Heart right ventricle (tissue), 16 donors: ENCODE measurements at regions of chr11 and their contacts with region 1.

Region 1: DNA sequence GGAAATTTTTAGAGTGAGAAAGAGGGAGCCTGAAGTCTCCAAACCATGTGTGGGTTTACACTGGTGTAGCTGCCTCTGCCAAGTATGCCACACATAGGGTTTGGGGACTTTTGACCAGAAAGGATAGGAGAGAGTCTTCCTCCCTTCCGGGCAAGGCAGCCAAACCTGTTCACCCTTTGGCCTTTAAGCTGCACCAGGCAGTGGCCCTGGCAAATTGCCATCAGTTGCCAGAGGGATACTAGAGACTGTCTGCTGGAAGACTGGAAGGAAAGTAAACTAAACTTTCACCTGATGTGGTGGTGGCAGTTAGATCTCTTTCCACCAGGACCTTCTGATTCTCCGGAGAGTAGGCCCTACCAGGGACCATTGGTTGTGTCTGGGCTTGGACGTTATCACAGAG is 1263.2 kb downstream of the FAM181B start:
- DNase-seq: no peak
- ATAC-seq: no peak
- H3K4me3 ChIP-seq: no peak overlapping the region
- H3K27ac ChIP-seq: no peak overlapping the region
- H3K4me1 ChIP-seq: no peaks in the 10 kb centered on the region
- H3K27me3 ChIP-seq: no peaks in the 10 kb centered on the region
- CTCF ChIP-seq: no peak

Region 2: GRCh38 chr11:81420668-81421550 is 49.5 kb before region 1 on chr11:
- intact Hi-C with region 1: loop called in 1 of 10 experiments (anchors 10 kb)
- DNase-seq: no peak
- ATAC-seq: peak in 2 of 8 donors; percentile 58 to 79
- H3K4me3 ChIP-seq: no peak overlapping the region
- H3K27ac ChIP-seq: no peak overlapping the region
- H3K4me1 ChIP-seq: no peaks in the 10 kb centered on the region
- H3K27me3 ChIP-seq: no peaks in the 10 kb centered on the region
- CTCF ChIP-seq: peak in 2 of 9 donors; percentile 28 to 31

Region 3: GRCh38 chr11:81802591-81802990 is 332.1 kb after region 1 on chr11:
- intact Hi-C with region 1: no loop called
- DNase-seq: no peak
- ATAC-seq: no peak
- H3K4me3 ChIP-seq: no peak overlapping the region
- H3K27ac ChIP-seq: no peak overlapping the region
- H3K4me1 ChIP-seq: no peaks in the 10 kb centered on the region
- H3K27me3 ChIP-seq: no peaks in the 10 kb centered on the region
- CTCF ChIP-seq: no peak